CD14-positive monocyte (primary cell): ENCODE measurements at regions of chr9 and their contacts with region 1.

Region 1: DNA sequence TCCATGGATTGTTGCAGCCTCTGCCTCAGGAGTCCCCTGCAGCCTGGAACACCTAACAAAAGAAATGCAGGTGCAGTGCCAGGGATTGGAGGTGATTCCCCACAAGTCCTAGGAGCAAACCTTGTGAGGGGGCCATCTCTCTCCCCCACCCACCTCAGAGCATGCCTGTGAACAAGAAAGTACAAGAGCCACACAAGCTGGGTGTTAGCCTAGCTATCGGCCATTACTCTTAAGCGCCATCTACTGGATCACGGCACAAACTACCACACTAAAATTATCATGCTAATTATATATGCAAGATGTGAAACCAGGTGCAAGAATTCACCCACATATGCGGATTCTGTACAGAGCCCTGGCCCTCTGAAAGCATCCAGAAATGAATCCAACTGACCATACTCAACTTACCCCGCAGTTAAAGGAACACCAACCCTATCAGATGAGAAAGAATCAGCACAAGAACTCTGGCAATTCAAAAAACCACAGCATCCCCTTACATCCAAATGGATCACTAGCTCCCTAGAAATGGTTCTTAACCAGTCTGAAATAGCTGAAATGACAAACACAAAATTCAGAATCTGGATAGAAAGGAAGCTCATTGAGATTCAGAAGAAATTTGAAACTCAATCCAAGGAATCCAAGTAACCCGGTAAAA is 16.5 kb upstream of the PRSS3 start:
- DNase-seq: peak; percentile 42 to 72 (median 61)
- H3K4me3 ChIP-seq: no peak overlapping the region
- H3K4me3 Mint-ChIP-seq: no peak overlapping the region
- H3K27ac ChIP-seq: no peak overlapping the region
- H3K27ac Mint-ChIP-seq: no peak overlapping the region
- H3K4me1 ChIP-seq: no peaks in the 10 kb centered on the region
- H3K4me1 Mint-ChIP-seq: peaks cover 11% of the 10 kb centered on the region
- H3K27me3 ChIP-seq: no peaks in the 10 kb centered on the region
- H3K27me3 Mint-ChIP-seq: peaks cover 6 to 11% (median 9%) of the 10 kb centered on the region in 3 donors
- CTCF ChIP-seq: peak; percentile 91

Region 2: GRCh38 chr9:33442999-33443435 is 335.8 kb before region 1 on chr9:
- intact Hi-C with region 1: no loop called
- DNase-seq: no peak
- H3K4me3 ChIP-seq: no peak overlapping the region
- H3K4me3 Mint-ChIP-seq: no peak overlapping the region
- H3K27ac ChIP-seq: no peak overlapping the region
- H3K27ac Mint-ChIP-seq: no peak overlapping the region
- H3K4me1 ChIP-seq: peaks cover 11 to 14% of the 10 kb centered on the region in 2 donors
- H3K4me1 Mint-ChIP-seq: peaks cover 16% of the 10 kb centered on the region
- H3K27me3 ChIP-seq: peaks cover under 1 to 8% of the 10 kb centered on the region in 2 donors
- H3K27me3 Mint-ChIP-seq: peaks cover 11 to 23% (median 12%) of the 10 kb centered on the region in 3 donors
- CTCF ChIP-seq: no peak

Region 3: GRCh38 chr9:33731142-33731541 is 47.7 kb before region 1 on chr9:
- intact Hi-C with region 1: loop called in 1 of 2 experiments (anchors 5 kb)
- DNase-seq: peak in 1 of 3 donors; percentile 8
- H3K4me3 ChIP-seq: no peak overlapping the region
- H3K4me3 Mint-ChIP-seq: peak overlapping the region in 1 of 2 donors; percentile 4
- H3K27ac ChIP-seq: no peak overlapping the region
- H3K27ac Mint-ChIP-seq: no peak overlapping the region
- H3K4me1 ChIP-seq: no peaks in the 10 kb centered on the region
- H3K4me1 Mint-ChIP-seq: peaks cover 2% of the 10 kb centered on the region
- H3K27me3 ChIP-seq: no peaks in the 10 kb centered on the region
- H3K27me3 Mint-ChIP-seq: peaks cover 4 to 13% (median 7%) of the 10 kb centered on the region in 3 donors
- CTCF ChIP-seq: no peak

Region 4: DNA sequence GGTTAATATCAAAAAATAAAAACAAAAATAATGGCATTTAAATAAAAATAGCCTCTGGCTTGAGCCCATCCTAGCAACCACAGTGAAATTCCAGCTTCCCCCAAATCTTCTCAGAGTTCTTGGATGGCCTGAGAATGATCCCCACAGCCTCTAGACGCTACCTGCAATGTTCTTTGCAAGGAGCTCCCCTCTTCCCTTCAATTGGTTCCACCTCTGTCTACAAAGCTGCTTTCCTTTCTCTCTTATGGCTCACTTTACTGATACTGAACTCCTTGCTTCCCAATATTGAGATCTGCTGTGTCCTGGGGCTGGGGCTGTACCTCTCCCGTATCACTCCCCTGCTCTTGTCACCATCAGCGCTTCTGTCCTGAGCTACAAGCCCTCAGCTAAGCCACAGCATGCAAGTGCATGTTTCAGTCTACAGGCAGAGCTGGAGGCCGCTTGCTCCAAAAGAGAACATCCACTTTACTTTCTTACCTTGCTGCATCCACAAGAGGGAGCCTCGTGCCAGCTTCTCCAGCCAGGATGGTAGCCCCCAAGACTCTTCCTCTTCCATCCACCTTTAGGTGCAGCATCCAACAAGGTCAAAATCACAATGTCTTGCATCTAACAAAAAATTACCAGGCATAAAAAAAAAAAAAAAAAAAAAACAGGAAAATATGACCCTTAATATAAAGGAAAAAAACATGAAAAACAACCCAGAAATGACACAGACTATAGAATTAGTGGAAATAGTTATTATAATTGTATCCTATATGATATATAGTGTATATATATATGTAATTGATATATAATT is 40.8 kb before region 1 on chr9:
- intact Hi-C with region 1: loop called (anchors 2 to 5 kb)
- DNase-seq: peak; percentile 23 to 48 (median 43)
- H3K4me3 ChIP-seq: no peak overlapping the region
- H3K4me3 Mint-ChIP-seq: no peak overlapping the region
- H3K27ac ChIP-seq: no peak overlapping the region
- H3K27ac Mint-ChIP-seq: no peak overlapping the region
- H3K4me1 ChIP-seq: no peaks in the 10 kb centered on the region
- H3K4me1 Mint-ChIP-seq: peaks cover 3% of the 10 kb centered on the region
- H3K27me3 ChIP-seq: no peaks in the 10 kb centered on the region
- H3K27me3 Mint-ChIP-seq: peaks cover 6 to 18% (median 7%) of the 10 kb centered on the region in 3 donors
- CTCF ChIP-seq: peak; percentile 80